ENCODE measurements at regions of chr3 and their contacts with region 1.

Region 1: GRCh38 chr3:111956995-111957734 is 21.7 kb upstream of the ABHD10 start:
- DNase-seq: peak; percentile 91
- H3K4me3 ChIP-seq: no peak overlapping the region
- H3K27ac ChIP-seq: peak overlapping the region; percentile 57
- H3K4me1 ChIP-seq: peaks cover 28% of the 10 kb centered on the region
- H3K27me3 ChIP-seq: no peaks in the 10 kb centered on the region
- CTCF ChIP-seq: no peak
- POLR2A ChIP-seq: no peak

Region 2: DNA sequence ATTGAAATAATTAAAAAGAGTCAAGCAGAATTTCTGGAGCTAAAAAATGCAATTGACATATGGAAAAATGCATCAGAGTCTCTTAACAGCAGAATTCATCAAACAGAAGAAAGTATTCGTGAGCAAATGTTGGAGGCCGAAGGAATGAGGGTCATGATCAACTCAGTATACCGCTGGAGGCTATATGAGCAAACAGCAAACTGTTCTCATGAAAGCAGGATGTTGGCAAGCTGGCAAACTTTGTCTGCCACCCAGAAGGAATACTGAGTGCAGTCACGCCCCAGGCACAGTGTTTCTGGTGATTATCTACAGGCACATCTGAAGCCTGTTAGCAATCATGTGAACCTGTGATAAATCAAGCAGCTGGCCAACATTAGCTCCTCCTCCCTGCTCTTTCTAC is 972.3 kb before region 1 on chr3:
- CTCF ChIA-PET with region 1: no interaction called
- POLR2A ChIA-PET with region 1: no interaction called
- dilution Hi-C with region 1: no loop called
- intact Hi-C with region 1: no loop called
- DNase-seq: no peak
- H3K4me3 ChIP-seq: no peak overlapping the region
- H3K27ac ChIP-seq: no peak overlapping the region
- H3K4me1 ChIP-seq: no peaks in the 10 kb centered on the region
- H3K27me3 ChIP-seq: no peaks in the 10 kb centered on the region
- CTCF ChIP-seq: no peak
- POLR2A ChIP-seq: no peak

Region 3: DNA sequence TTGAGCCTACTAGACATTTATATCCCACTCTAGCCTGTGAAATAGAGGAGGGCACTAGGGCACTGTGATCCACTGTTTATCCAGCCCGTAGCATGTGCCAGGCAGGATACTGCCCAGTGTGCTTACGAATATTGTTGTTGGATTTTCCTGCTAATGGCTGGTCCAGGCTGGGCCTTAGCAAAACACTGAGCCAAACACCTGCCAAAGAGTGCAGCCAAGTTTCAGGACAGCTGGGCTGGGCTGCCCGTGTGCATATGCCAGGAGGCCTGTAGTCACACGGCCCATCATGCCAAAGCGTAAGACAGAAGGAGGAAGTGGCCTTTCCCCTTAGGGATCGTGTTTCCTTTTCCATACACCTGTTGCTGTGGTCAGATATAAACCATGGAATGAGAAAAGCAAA is 32.9 kb before region 1 on chr3:
- CTCF ChIA-PET with region 1: interaction called, 6 read pairs
- POLR2A ChIA-PET with region 1: no interaction called
- dilution Hi-C with region 1: no loop called
- intact Hi-C with region 1: loop called (anchors 1 kb)
- DNase-seq: peak; percentile 99
- H3K4me3 ChIP-seq: no peak overlapping the region
- H3K27ac ChIP-seq: peak overlapping the region; percentile 69
- H3K4me1 ChIP-seq: peaks cover 29% of the 10 kb centered on the region
- H3K27me3 ChIP-seq: no peaks in the 10 kb centered on the region
- CTCF ChIP-seq: no peak
- POLR2A ChIP-seq: no peak

Measured in endothelial cell of umbilical vein (primary cell).